ENCODE measurements at regions of chr1 and their contacts with region 1.

Region 1: GRCh38 chr1:114024049-114024448 is 44.8 kb downstream of the OLFML3 start:
- DNase-seq: peak; percentile 31 to 37
- ATAC-seq: peak; percentile 47 to 62
- H3K4me3 ChIP-seq: no peak overlapping the region
- H3K27ac ChIP-seq: peak overlapping the region; percentile 71 to 85 (median 82)
- H3K4me1 ChIP-seq: peaks cover 42 to 45% of the 10 kb centered on the region in 2 donors
- H3K27me3 ChIP-seq: no peaks in the 10 kb centered on the region
- CTCF ChIP-seq: no peak
- POLR2A ChIP-seq: no peak

Region 2: GRCh38 chr1:113783254-113784099 is 240.6 kb before region 1 on chr1:
- in situ Hi-C with region 1: no loop called
- intact Hi-C with region 1: loop called (anchors 5 kb)
- DNase-seq: peak in 1 of 2 donors; percentile 24
- ATAC-seq: peak; percentile 25 to 50
- H3K4me3 ChIP-seq: peak overlapping the region in 3 of 4 donors; percentile 3 to 23 (median 19)
- H3K27ac ChIP-seq: peak overlapping the region; percentile 76 to 84 (median 80)
- H3K4me1 ChIP-seq: peaks cover 72 to 74% of the 10 kb centered on the region in 2 donors
- H3K27me3 ChIP-seq: no peaks in the 10 kb centered on the region
- CTCF ChIP-seq: no peak
- POLR2A ChIP-seq: no peak

Region 3: GRCh38 chr1:113991467-113991997 is 32.5 kb before region 1 on chr1:
- in situ Hi-C with region 1: no loop called
- intact Hi-C with region 1: loop called (anchors 1 kb)
- DNase-seq: peak in 1 of 2 donors; percentile 32
- ATAC-seq: peak; percentile 66 to 81
- H3K4me3 ChIP-seq: no peak overlapping the region
- H3K27ac ChIP-seq: peak overlapping the region; percentile 73 to 85 (median 77)
- H3K4me1 ChIP-seq: peaks cover 3 to 12% of the 10 kb centered on the region in 2 donors
- H3K27me3 ChIP-seq: no peaks in the 10 kb centered on the region
- CTCF ChIP-seq: no peak
- POLR2A ChIP-seq: no peak

Region 4: DNA sequence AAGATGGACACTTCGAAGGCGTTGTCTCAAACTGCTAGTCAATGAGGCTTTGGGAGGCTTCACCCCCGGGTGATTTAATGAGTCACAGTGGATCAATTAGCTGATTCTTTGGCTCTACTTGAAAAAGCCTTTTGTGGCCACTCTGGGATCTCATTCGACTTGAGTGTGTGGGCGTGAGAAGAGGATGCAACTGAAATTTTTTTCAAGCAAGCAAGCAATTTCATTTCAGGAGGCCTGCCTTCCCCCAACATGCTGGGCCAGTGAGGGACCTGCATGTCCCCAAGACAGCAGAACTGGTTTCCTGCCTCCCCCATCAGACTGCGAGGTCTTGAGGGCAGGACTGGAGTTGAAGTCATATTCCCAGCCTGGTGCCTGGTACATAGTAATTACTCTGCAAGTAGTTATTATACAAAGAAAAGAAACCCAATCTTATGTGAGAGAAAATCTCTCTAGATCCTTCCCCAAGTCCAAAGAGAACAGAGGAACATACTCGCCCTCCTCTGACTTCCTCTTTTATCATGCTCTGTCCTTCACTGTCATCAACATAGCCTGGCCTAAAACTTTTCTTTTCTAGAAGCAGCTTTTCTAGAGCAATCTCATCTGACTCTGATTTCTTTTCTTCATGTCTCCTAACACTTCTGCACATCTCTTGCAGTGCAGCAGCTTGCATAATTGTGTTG is 106.9 kb after region 1 on chr1:
- in situ Hi-C with region 1: no loop called
- intact Hi-C with region 1: no loop called
- DNase-seq: no peak
- ATAC-seq: no peak
- H3K4me3 ChIP-seq: no peak overlapping the region
- H3K27ac ChIP-seq: no peak overlapping the region
- H3K4me1 ChIP-seq: peaks cover 0 to 4% of the 10 kb centered on the region in 2 donors
- H3K27me3 ChIP-seq: no peaks in the 10 kb centered on the region
- CTCF ChIP-seq: no peak
- POLR2A ChIP-seq: no peak

Region 5: GRCh38 chr1:114685851-114686534 is 661.9 kb after region 1 on chr1:
- in situ Hi-C with region 1: no loop called
- intact Hi-C with region 1: loop called (anchors 10 kb)
- DNase-seq: no peak
- ATAC-seq: peak; percentile 41 to 82
- H3K4me3 ChIP-seq: no peak overlapping the region
- H3K27ac ChIP-seq: peak overlapping the region; percentile 88 to 98 (median 91)
- H3K4me1 ChIP-seq: peaks cover 63 to 70% of the 10 kb centered on the region in 2 donors
- H3K27me3 ChIP-seq: no peaks in the 10 kb centered on the region
- CTCF ChIP-seq: no peak
- POLR2A ChIP-seq: no peak